PC-3 (cell line): ENCODE measurements at regions of chr10 and their contacts with region 1.

Region 1: DNA sequence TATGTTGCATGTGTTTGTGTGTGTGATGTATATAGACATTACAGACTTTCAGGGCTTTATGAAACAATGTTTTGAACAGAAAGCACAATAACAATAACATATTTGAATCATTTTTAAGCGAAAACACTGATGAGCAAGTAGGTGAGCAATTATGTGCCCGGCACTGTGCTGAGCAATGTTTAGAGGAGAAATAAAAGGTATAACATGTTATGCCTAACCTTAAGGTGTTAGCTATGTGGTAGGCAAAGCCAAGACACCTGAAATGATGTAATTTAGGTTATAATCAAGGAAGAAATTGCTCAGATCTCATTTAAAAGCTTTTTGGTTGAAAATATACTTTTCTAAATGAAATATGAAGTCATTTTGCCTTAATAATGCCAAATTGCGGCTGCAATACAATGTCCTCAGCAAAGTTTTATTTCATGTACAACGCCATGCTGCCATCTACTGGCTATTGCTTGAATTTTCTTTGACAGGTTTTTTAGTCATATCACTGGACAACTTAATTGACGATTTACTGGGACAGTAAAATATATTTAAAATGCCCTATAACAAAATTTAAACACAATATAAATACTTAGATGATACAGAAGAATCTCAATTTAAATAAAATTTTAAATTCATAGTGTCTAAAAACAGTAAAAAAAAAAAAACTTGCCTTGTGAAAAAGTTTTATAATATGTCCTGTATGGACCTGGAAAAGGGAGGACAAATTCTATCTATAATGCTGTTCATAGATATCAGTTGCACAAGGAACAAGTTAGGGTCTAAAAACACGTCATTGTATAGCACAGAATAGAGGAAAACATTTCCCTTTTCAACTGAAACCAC is 131.1 kb upstream of the CDK1 start:
- DNase-seq: peak; percentile 98
- ATAC-seq: peak; percentile 27
- H3K4me3 ChIP-seq: no peak overlapping the region
- H3K27ac ChIP-seq: no peak overlapping the region
- H3K4me1 ChIP-seq: peaks cover 39% of the 10 kb centered on the region
- H3K27me3 ChIP-seq: no peaks in the 10 kb centered on the region
- CTCF ChIP-seq: peak; percentile 99

Region 2: DNA sequence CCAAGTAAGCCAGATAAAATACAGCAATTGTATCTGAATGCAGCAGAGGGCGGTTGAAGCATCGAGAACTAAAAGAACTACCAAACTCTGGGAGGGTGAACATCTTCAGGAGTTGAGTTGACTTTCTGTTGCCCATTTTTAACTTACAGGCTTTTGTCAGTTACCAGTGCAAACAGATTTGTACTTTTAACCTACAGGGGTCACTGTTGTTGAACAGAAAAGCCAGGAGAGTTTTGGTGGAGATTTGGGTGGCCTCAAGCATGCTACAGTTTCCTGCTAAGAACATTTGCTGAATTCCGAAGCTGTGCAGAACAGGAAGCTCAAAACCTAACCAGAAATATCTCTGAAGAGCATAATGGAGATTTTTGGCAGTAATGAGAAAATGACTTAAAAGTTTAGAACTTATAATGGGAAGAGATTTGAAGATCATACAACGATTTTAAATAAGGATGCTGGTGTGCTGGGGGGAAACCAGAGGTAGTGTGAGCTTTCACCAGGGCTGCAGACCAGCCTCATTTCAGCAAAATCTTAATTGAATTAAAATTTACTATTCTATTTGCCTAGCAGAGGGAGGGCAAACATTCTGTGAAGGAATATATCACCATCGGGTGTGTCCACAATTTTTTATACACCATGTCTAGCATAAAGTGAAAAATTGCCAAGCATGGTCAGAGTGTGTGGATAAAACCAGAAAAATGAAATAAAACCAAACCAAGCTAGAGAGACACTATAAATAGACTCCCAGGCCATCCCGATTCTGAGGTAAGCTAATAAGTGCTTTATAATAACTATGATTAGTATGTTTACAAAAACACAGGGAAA is 532.2 kb before region 1 on chr10:
- CTCF ChIA-PET with region 1: no interaction called
- POLR2A ChIA-PET with region 1: no interaction called
- intact Hi-C with region 1: loop called (anchors 5 kb)
- DNase-seq: peak; percentile 96
- ATAC-seq: peak; percentile 92
- H3K4me3 ChIP-seq: no peak overlapping the region
- H3K27ac ChIP-seq: no peak overlapping the region
- H3K4me1 ChIP-seq: peaks cover 7% of the 10 kb centered on the region
- H3K27me3 ChIP-seq: no peaks in the 10 kb centered on the region
- CTCF ChIP-seq: peak; percentile 99

Region 3: DNA sequence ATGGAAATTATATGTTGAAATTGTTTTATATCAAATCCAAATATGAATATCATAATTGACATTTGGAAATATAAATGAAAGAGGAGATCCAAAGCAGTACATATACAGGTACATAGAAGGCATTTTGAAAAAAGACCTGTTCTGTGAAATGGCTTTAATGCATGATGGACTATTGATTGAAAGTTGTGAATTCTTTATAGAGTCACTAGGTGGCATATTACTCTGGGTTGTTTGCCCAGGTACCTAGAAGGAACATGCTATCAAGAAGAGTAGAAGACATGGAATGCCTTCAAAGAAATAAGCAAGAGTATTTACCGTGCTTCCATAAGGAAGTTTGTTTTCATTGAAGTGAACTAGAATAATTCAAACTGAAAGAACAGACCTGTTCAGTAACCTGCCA is 97.5 kb before region 1 on chr10:
- CTCF ChIA-PET with region 1: no interaction called
- POLR2A ChIA-PET with region 1: no interaction called
- intact Hi-C with region 1: loop called (anchors 1 kb)
- DNase-seq: peak; percentile 89
- ATAC-seq: peak; percentile 99
- H3K4me3 ChIP-seq: no peak overlapping the region
- H3K27ac ChIP-seq: no peak overlapping the region
- H3K4me1 ChIP-seq: no peaks in the 10 kb centered on the region
- H3K27me3 ChIP-seq: no peaks in the 10 kb centered on the region
- CTCF ChIP-seq: peak; percentile 97

Region 4: GRCh38 chr10:60677531-60678129 is 30.4 kb after region 1 on chr10:
- CTCF ChIA-PET with region 1: interaction called, 10 read pairs
- POLR2A ChIA-PET with region 1: no interaction called
- intact Hi-C with region 1: no loop called
- DNase-seq: no peak
- ATAC-seq: no peak
- H3K4me3 ChIP-seq: no peak overlapping the region
- H3K27ac ChIP-seq: no peak overlapping the region
- H3K4me1 ChIP-seq: no peaks in the 10 kb centered on the region; the same call in 1 of the 2 replicates
- H3K27me3 ChIP-seq: no peaks in the 10 kb centered on the region
- CTCF ChIP-seq: no peak

Region 5: GRCh38 chr10:60769406-60769805 is 122.2 kb after region 1 on chr10:
- CTCF ChIA-PET with region 1: interaction called, 4 read pairs
- POLR2A ChIA-PET with region 1: no interaction called
- intact Hi-C with region 1: loop called (anchors 1 kb)
- DNase-seq: no peak
- ATAC-seq: no peak
- H3K4me3 ChIP-seq: no peak overlapping the region
- H3K27ac ChIP-seq: no peak overlapping the region
- H3K4me1 ChIP-seq: no peaks in the 10 kb centered on the region
- H3K27me3 ChIP-seq: no peaks in the 10 kb centered on the region
- CTCF ChIP-seq: no peak

Region 6: GRCh38 chr10:61452655-61453641 is 805.8 kb after region 1 on chr10 and contains the start of gene TMEM26:
- CTCF ChIA-PET with region 1: no interaction called
- POLR2A ChIA-PET with region 1: no interaction called
- intact Hi-C with region 1: no loop called
- DNase-seq: no peak
- ATAC-seq: peak; percentile 39
- H3K4me3 ChIP-seq: no peak within 1 kb of the TSS
- H3K27ac ChIP-seq: no peak within 1 kb of the TSS
- H3K4me1 ChIP-seq: no peaks in the 10 kb centered on the region
- H3K27me3 ChIP-seq: no peaks in the 10 kb centered on the region
- CTCF ChIP-seq: no peak
- total RNA-seq, gene TMEM26: 0.12 TPM in 1 of 2 replicates, not detected in the other